Activated CD8-positive, alpha-beta T cell treated with anti-CD3 and anti-CD28 coated beads, Interleukin-2, amount 10 ng/mL, durations not matched to agents 7 days and 5 days (primary cell): ENCODE measurements at regions of chr12 and their contacts with region 1.

Region 1: DNA sequence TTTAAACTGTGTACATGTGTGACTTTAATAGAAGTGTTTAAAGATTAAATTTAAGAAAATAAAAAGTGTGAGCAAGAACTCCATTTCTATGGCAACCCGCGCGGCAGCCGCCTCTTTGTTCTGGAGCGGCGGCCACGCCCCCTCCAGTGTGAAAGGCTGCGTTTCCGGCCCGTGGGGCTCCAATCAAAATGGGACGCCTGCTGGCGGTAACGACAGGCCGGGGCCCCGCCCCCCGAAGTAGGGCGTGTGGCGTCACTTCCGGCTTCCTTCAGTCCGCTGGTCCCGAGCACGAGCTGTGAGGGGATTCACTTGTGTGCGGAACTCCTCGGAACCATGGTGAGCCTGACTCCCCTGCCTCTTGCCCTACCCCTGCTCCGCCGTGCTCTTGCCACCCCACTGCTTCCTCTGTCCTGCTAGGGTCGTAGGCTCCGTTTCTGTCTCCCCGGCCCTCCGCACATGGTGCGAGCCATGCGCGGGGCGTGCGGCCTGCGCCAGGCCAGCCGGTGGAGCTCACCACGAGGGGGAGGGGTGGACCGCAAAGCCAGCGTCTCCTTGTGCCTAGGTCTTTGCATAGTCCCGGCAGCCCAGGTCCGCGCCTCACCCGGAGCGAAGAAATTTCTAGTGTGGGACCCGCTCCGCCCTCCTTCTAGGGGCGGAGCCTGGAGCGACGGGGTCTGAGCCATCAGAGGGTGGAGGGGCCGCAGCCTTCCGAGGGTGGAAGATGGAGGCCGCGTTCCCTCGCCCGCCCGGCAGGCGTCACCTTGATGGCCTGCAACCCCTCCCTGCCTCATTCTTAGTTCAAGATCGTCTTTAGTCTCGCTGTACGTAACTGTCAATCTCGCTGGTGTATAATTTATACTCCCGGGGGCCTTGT is at the start of gene CCT2:
- DNase-seq: peak; percentile 98
- ATAC-seq: peak; percentile 92
- H3K4me3 Mint-ChIP-seq: peak within 1 kb of the TSS; percentile 96
- H3K27ac Mint-ChIP-seq: peak within 1 kb of the TSS; percentile 98
- H3K4me1 Mint-ChIP-seq: peaks cover 13% of the 10 kb centered on the region
- H3K27me3 Mint-ChIP-seq: no peaks in the 10 kb centered on the region
- total RNA-seq, gene CCT2: 238 to 252 TPM

Region 2: DNA sequence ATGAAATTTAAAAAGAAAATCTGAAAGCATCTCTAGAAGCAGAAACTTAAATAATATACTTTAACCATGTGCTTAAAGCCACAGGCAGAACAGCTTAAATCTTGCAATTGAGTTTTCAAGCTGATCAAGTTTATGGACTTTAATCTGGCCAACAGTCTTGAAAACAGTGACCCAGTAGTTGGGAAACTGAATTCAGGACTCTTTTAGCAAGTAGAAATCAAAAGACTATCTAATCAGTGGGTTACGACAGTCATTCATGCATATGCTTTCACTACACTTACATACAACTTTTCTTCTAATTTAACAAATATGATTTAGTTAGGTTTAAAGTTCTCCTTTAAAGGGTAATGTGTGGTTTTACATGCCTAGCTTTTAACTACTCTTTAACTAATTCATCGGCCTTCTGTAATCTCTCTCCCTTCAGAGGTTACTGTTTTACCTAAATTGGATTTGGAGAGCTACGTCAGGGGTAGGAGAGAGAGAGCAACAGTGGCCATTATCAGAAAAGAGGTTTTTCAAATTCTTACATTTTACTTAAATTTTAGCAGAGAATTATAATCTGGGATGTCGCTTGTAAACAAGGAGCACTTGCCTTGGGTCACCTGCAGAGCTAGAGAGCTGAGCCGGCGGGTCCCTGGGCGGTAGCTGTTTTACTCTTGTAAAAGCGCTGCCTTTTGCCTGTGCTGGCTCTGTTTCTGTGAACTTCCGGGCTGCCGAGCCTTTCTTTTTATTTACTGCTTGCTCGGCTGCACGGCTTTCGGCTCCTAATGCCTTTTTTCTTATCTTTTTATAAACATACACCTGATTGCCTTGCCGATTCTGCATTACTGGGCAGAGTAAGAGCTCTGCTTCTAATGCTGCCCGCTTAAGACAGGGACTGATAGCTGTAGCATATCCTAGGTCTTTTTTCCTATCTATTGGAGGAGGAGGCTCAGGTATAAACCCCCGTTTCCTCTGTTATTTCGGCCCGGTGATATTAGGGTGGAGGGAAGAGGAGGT is 254.7 kb before region 1 on chr12:
- CTCF ChIA-PET with region 1: interaction called, 4 read pairs
- POLR2A ChIA-PET with region 1: interaction called, 12 read pairs
- DNase-seq: peak; percentile 73
- ATAC-seq: peak; percentile 85
- H3K4me3 Mint-ChIP-seq: peak overlapping the region; percentile 79
- H3K27ac Mint-ChIP-seq: peak overlapping the region; percentile 92
- H3K4me1 Mint-ChIP-seq: peaks cover 43% of the 10 kb centered on the region
- H3K27me3 Mint-ChIP-seq: no peaks in the 10 kb centered on the region

Region 3: GRCh38 chr12:69459477-69459876 is 125.9 kb before region 1 on chr12:
- CTCF ChIA-PET with region 1: no interaction called
- POLR2A ChIA-PET with region 1: no interaction called
- DNase-seq: no peak
- ATAC-seq: no peak
- H3K4me3 Mint-ChIP-seq: no peak overlapping the region
- H3K27ac Mint-ChIP-seq: no peak overlapping the region
- H3K4me1 Mint-ChIP-seq: no peaks in the 10 kb centered on the region
- H3K27me3 Mint-ChIP-seq: peaks cover 6% of the 10 kb centered on the region

Region 4: DNA sequence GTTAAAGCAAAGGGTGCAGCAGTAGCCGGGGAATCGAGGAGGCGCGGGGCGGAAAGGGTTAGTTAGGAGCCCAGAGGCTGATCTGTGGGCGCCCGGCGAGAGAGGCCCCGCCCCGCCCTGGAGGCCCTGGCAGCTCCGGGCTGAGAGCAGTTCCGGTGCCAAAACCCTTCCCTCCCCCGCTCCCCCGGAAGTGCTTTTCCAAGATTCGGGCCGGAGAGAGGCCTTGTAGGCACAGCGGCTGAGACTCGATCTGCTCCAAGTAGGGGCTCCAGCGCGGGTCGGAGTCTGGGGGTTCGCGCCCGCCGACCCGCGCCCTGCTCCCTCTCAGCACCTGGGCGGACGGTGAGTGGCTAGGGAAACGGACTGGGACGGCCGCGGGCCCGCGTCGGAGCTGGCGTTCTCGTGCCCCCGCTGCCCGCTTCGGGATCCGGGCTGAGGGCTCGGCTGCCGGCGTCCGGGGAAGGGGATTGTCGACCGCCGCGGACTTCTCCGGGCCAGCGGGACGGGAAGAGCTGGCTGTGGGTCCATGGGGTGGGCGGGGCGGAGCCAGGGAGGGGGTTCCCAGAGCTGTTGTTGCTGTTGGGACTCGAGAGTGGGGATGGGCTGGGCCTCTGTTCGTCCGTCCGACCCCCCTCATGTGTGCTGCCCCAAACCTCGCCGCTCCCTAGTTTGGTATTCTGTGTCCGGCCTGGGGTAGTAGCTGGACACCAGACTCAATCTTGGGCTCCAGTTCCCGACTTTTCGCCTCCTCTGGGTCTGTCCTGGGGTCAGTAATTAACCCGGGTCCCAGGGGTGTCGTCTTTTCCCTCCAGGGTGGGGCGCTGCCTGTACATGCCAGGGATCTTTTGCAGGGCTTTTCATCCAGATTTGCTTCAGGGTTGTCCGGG is 115.0 kb before region 1 on chr12 and contains the start of gene FRS2:
- CTCF ChIA-PET with region 1: no interaction called
- POLR2A ChIA-PET with region 1: interaction called, 10 read pairs
- DNase-seq: peak; percentile 89
- ATAC-seq: peak; percentile 99
- H3K4me3 Mint-ChIP-seq: peak within 1 kb of the TSS; percentile 98
- H3K27ac Mint-ChIP-seq: peak within 1 kb of the TSS; percentile 97
- H3K4me1 Mint-ChIP-seq: peaks cover 34% of the 10 kb centered on the region
- H3K27me3 Mint-ChIP-seq: no peaks in the 10 kb centered on the region
- total RNA-seq, gene FRS2: 13.0 to 13.7 TPM